B cell (primary cell): ENCODE measurements at regions of chr1 and their contacts with region 1.

Region 1: DNA sequence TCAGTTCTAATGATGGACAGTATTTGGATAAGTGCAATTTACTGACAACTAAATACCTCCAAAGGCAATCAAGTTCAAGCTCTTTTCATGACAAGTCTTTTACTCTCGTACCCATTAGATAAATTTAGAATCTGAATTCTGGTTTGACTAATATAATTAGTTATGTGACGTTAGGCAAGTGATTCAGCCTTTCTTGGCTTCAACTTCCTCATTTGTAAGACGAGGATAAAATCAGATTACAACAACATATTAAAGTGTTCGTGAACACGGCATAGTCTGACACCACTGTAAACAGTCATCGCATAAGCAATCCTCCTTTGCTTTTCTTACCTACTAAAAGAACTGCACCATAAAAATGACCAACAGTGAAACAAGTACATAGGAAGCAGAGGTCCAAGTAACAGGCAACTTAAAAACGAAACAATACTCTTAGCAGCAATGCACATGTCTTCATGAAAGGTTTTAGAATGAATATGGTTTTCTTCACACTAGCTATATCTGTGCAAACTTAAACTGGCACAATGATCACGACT is 25.7 kb downstream of the COA6 start:
- DNase-seq: peak; percentile 67
- ATAC-seq: peak; percentile 72
- H3K4me3 ChIP-seq: peak overlapping the region; percentile 37 to 83 (median 52)
- H3K4me3 Mint-ChIP-seq: peak overlapping the region; percentile 99
- H3K27ac ChIP-seq: peak overlapping the region; percentile 66 to 80
- H3K27ac Mint-ChIP-seq: peak overlapping the region; percentile 94
- H3K4me1 ChIP-seq: peaks cover 18 to 20% of the 10 kb centered on the region in 2 donors
- H3K4me1 Mint-ChIP-seq: peaks cover 36% of the 10 kb centered on the region
- H3K27me3 ChIP-seq: no peaks in the 10 kb centered on the region
- H3K27me3 Mint-ChIP-seq: no peaks in the 10 kb centered on the region
- CTCF ChIP-seq: no peak

Region 2: DNA sequence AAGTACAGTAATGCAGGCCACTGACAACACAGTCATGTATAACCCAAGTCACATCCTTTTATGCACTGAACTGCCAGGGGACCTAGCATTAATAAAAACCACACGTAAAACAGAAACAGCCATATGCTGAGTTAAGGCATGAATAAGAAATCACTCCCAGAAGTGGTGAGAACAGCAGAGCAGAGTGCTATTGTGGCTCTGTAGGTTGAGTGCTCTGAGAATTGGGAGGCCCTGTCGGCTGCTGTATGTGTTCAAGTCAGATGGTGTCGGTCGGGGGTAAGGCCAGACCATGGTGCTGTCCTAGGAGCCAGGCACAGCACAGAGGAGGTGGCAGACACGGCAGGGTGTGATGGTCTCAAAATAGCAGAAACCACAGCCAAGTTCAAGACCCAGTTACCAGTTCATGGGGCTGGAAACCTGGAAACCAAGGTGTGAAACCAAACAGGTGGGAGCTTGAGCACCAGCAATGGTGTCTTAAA is 152.2 kb before region 1 on chr1:
- CTCF ChIA-PET with region 1: no interaction called
- POLR2A ChIA-PET with region 1: no interaction called
- intact Hi-C with region 1: no loop called
- DNase-seq: peak; percentile 21
- ATAC-seq: no peak
- H3K4me3 ChIP-seq: no peak overlapping the region
- H3K4me3 Mint-ChIP-seq: no peak overlapping the region
- H3K27ac ChIP-seq: no peak overlapping the region
- H3K27ac Mint-ChIP-seq: no peak overlapping the region
- H3K4me1 ChIP-seq: peaks cover 14 to 34% of the 10 kb centered on the region in 2 donors
- H3K4me1 Mint-ChIP-seq: peaks cover 12% of the 10 kb centered on the region
- H3K27me3 ChIP-seq: peaks cover 0 to 3% (median 0%) of the 10 kb centered on the region in 4 experiments
- H3K27me3 Mint-ChIP-seq: peaks cover 4% of the 10 kb centered on the region
- CTCF ChIP-seq: no peak

Region 3: DNA sequence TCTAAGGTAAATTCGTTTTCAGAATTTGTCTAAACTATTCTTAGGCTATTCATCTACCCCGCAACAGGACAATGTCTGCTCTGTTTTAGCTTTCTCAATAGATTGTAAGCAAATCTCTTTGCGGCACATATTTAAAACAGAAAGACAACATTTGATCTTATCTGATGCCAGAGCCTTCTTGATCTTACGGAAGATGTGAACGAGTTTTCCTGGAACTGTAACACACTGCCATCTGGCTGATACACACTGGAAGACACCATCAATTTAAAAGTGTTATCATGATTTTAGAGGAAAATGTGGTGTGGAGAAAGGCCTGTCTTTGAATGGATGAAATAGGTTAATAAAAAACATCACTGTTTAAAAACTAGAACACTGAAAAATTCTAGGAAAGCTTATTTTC is 10.4 kb after region 1 on chr1:
- CTCF ChIA-PET with region 1: no interaction called
- POLR2A ChIA-PET with region 1: no interaction called
- intact Hi-C with region 1: no loop called
- DNase-seq: no peak
- ATAC-seq: no peak
- H3K4me3 ChIP-seq: no peak overlapping the region
- H3K4me3 Mint-ChIP-seq: no peak overlapping the region
- H3K27ac ChIP-seq: no peak overlapping the region
- H3K27ac Mint-ChIP-seq: no peak overlapping the region
- H3K4me1 ChIP-seq: no peaks in the 10 kb centered on the region
- H3K4me1 Mint-ChIP-seq: no peaks in the 10 kb centered on the region
- H3K27me3 ChIP-seq: no peaks in the 10 kb centered on the region
- H3K27me3 Mint-ChIP-seq: no peaks in the 10 kb centered on the region
- CTCF ChIP-seq: no peak

Region 4: DNA sequence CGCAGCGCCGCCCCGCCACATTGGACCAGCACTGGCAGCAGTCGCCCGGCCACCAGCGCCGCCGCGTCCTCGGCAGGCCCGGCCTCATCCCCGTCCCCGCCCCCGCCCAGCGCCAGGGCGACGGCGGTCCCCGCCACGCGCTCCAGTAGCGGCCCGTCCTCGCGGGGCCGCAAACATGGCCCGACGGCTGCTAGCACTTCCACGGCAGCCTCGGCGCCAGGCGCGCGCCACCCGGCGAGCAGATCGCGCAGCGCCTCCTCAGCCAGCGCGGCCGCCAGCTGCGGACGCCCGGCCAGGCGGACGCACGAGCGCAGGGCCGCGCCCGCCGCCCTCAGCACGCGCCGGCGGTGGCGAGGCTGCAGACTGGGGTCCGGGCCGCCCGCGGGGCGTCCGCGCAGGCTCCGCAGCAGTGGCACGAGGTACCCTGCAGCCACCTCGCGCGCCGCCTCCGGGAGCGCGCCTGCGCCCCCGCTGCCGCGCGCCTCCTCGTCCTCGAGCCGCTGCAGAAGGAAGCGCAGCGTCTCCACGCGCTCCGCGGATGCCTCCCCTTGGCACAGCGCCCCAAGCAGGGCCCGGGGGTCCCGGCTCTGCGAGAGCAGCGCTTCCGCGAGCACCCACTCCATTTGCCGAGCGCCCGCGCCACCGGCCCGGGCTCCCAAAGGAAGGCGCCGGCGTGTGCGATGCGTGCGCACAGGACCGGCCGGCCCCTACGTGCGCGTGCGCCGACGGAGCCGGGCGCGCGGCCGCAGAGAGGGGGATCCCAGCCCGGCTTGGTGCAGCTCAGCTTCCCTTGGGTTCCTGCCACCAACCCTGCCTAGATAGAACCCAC is 79.8 kb after region 1 on chr1 and contains the start of gene TARBP1:
- CTCF ChIA-PET with region 1: no interaction called
- POLR2A ChIA-PET with region 1: no interaction called
- intact Hi-C with region 1: loop called (anchors 2 kb)
- DNase-seq: peak; percentile 93
- ATAC-seq: peak; percentile 68
- H3K4me3 ChIP-seq: peak within 1 kb of the TSS; percentile 46 to 76 (median 68)
- H3K4me3 Mint-ChIP-seq: peak within 1 kb of the TSS; percentile 87
- H3K27ac ChIP-seq: peak within 1 kb of the TSS; percentile 49 to 69
- H3K27ac Mint-ChIP-seq: peak within 1 kb of the TSS; percentile 89
- H3K4me1 ChIP-seq: peaks cover 30 to 36% of the 10 kb centered on the region in 2 donors
- H3K4me1 Mint-ChIP-seq: peaks cover 38% of the 10 kb centered on the region
- H3K27me3 ChIP-seq: no peaks in the 10 kb centered on the region
- H3K27me3 Mint-ChIP-seq: peaks cover 6% of the 10 kb centered on the region
- CTCF ChIP-seq: no peak
- total RNA-seq, gene TARBP1: 35.4 and 36.0 TPM in 2 replicates